GM12878 (cell line): ENCODE measurements at regions of chr7 and their contacts with region 1.

Region 1: GRCh38 chr7:82388138-82388537 is 55.4 kb downstream of the CACNA2D1 start:
- DNase-seq: no peak
- ATAC-seq: no peak
- H3K4me3 ChIP-seq: no peak overlapping the region
- H3K27ac ChIP-seq: no peak overlapping the region
- H3K4me1 ChIP-seq: no peaks in the 10 kb centered on the region
- H3K27me3 ChIP-seq: no peaks in the 10 kb centered on the region
- CTCF ChIP-seq: no peak
- EP300 ChIP-seq: no peak
- POLR2A ChIP-seq: no peak
- RAD21 ChIP-seq: no peak

Region 2: DNA sequence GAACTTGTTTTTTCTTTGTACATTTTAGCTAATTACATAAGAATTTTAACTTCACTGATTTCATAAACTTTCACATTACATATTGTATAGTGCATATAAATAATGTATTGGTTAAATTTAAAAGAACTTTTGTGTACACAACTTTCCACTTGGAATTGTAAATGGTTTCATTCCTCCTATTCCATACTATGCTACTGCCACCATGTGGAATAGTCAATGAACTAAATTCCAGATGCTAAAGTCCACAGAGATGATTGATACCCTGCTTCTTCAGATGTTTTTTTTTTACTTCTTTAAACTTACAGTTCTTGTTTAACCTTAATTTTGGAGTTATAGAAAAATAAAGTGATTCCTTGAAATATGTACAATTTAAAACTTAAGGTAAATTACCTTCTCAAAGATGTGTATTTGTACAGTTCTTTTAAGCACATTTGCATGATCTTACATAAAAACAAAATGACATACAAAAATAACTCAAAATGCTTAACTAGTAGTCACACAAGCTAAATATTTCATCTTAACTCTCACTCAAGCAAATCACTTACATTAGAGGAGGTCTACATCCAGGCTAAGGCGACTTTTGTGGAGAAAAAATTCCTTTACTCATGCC is 370.7 kb before region 1 on chr7:
- CTCF ChIA-PET with region 1: no interaction called
- POLR2A ChIA-PET with region 1: no interaction called
- RAD21 ChIA-PET with region 1: no interaction called
- SMC1A ChIA-PET with region 1: no interaction called
- in situ Hi-C with region 1: no loop called
- intact Hi-C with region 1: no loop called
- DNase-seq: no peak
- ATAC-seq: 0 out of 3 replicates have a peak, but pooled peaks have one; percentile 28
- H3K4me3 ChIP-seq: no peak overlapping the region
- H3K27ac ChIP-seq: no peak overlapping the region
- H3K4me1 ChIP-seq: no peaks in the 10 kb centered on the region
- H3K27me3 ChIP-seq: no peaks in the 10 kb centered on the region; a peak in 1 of 4 replicates
- CTCF ChIP-seq: peak; percentile 14 to 52 (median 28); a peak in 2 of 6 replicates
- EP300 ChIP-seq: no peak
- POLR2A ChIP-seq: no peak
- RAD21 ChIP-seq: peak; percentile 71

Region 3: DNA sequence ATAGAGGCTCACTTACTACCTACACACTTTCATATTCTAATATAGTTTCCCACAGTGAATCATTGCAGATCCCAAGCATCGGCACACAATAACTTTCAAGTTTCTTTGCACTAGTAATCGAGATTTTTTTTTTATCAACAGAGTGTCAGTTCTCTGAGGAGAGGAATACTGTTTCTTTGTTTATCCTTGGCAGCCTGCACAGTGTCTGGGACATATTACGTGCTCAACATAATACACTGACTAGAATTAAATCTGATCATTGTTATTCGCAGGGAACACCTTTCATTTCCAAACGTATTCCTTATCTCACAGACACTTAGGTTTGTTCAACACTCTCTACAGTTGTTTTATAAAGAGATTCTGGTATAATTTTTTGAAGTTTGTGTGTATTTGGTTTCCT is 39.9 kb before region 1 on chr7:
- CTCF ChIA-PET with region 1: interaction called, 3 read pairs
- POLR2A ChIA-PET with region 1: no interaction called
- RAD21 ChIA-PET with region 1: interaction called, 4 read pairs
- SMC1A ChIA-PET with region 1: interaction called, 11 read pairs
- in situ Hi-C with region 1: no loop called
- intact Hi-C with region 1: no loop called
- DNase-seq: no peak
- ATAC-seq: peak; percentile 16; the same call in 2 of the 3 replicates
- H3K4me3 ChIP-seq: no peak overlapping the region
- H3K27ac ChIP-seq: no peak overlapping the region
- H3K4me1 ChIP-seq: no peaks in the 10 kb centered on the region
- H3K27me3 ChIP-seq: no peaks in the 10 kb centered on the region
- CTCF ChIP-seq: no peak
- EP300 ChIP-seq: no peak
- POLR2A ChIP-seq: no peak
- RAD21 ChIP-seq: no peak

Region 4: GRCh38 chr7:82362129-82362706 is 25.9 kb before region 1 on chr7:
- CTCF ChIA-PET with region 1: interaction called, 6 read pairs
- POLR2A ChIA-PET with region 1: interaction called, 5 read pairs
- RAD21 ChIA-PET with region 1: interaction called, 12 read pairs
- SMC1A ChIA-PET with region 1: interaction called, 6 read pairs
- in situ Hi-C with region 1: no loop called
- intact Hi-C with region 1: no loop called
- DNase-seq: no peak
- ATAC-seq: no peak
- H3K4me3 ChIP-seq: no peak overlapping the region
- H3K27ac ChIP-seq: no peak overlapping the region
- H3K4me1 ChIP-seq: no peaks in the 10 kb centered on the region
- H3K27me3 ChIP-seq: no peaks in the 10 kb centered on the region
- CTCF ChIP-seq: no peak
- EP300 ChIP-seq: no peak
- POLR2A ChIP-seq: no peak
- RAD21 ChIP-seq: no peak

Region 5: DNA sequence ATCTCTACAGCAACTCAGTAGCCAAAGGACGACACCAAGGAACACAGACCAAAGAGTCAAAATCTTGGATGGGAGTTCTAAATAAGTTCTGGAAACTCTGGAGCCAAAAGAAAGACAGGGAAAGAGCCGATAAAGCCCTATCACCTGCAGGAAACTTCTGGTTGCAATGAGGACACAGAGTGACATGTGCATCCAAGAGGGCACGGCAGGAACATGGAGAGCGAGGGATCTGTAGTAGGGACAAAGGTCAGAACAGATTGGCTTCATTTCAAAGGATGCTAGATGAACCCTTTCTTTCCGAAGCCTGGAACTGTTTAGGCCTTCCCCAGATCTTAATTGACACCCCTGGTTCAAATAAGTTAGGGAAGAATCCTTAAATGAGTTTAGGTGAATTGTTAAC is 16.0 kb after region 1 on chr7:
- CTCF ChIA-PET with region 1: interaction called, 6 read pairs
- POLR2A ChIA-PET with region 1: interaction called, 5 read pairs
- RAD21 ChIA-PET with region 1: interaction called, 19 read pairs
- SMC1A ChIA-PET with region 1: interaction called, 70 read pairs
- in situ Hi-C with region 1: no loop called
- intact Hi-C with region 1: no loop called
- DNase-seq: no peak
- ATAC-seq: peak; percentile 18; the same call in 1 of the 3 replicates
- H3K4me3 ChIP-seq: no peak overlapping the region
- H3K27ac ChIP-seq: no peak overlapping the region
- H3K4me1 ChIP-seq: no peaks in the 10 kb centered on the region
- H3K27me3 ChIP-seq: no peaks in the 10 kb centered on the region
- CTCF ChIP-seq: no peak
- EP300 ChIP-seq: no peak
- POLR2A ChIP-seq: no peak
- RAD21 ChIP-seq: no peak

Region 6: GRCh38 chr7:82410461-82410860 is 22.3 kb after region 1 on chr7:
- CTCF ChIA-PET with region 1: no interaction called
- POLR2A ChIA-PET with region 1: interaction called, 14 read pairs
- RAD21 ChIA-PET with region 1: interaction called, 19 read pairs
- SMC1A ChIA-PET with region 1: interaction called, 32 read pairs
- in situ Hi-C with region 1: no loop called
- intact Hi-C with region 1: no loop called
- DNase-seq: no peak
- ATAC-seq: peak; percentile 5; the same call in 1 of the 3 replicates
- H3K4me3 ChIP-seq: no peak overlapping the region
- H3K27ac ChIP-seq: no peak overlapping the region
- H3K4me1 ChIP-seq: no peaks in the 10 kb centered on the region
- H3K27me3 ChIP-seq: no peaks in the 10 kb centered on the region
- CTCF ChIP-seq: no peak
- EP300 ChIP-seq: no peak
- POLR2A ChIP-seq: no peak
- RAD21 ChIP-seq: no peak

Region 7: DNA sequence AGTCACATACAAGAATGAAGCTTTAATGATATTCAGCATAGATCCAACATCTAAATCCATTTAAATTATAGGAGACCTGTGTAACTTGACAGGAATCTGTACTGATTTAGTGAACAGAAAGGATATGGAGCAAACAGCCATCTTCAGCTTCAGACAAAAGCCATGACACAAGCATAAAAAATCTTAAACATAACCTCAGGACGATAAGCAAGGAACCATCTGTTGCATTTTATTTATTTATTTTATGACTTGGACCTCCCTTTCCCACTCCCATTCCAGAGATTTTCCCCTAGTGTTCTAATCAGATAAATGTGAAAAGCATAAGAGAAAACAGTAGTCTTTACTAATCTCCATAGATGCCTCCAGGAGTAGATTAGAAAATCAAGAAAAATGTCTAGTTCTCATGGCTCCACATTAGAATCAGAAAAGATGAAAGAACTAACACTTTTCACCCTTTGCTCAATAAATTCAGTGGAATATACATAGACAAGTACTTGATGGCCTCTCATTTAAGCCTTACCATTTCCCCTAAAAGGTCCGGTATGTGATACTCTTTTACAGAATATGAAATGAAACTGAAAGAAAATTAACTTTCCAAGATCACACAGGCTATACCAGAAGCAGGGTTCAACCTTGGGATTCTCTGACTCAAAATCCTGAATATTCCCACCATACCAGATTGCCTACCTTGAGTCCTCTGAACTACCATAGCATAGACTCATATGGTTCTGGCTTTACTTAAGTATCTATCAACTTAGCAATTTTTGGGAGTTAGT is 40.2 kb after region 1 on chr7:
- CTCF ChIA-PET with region 1: interaction called, 5 read pairs
- POLR2A ChIA-PET with region 1: interaction called, 20 read pairs
- RAD21 ChIA-PET with region 1: interaction called, 7 read pairs
- SMC1A ChIA-PET with region 1: interaction called, 21 read pairs
- in situ Hi-C with region 1: no loop called
- intact Hi-C with region 1: loop called (anchors 2 kb)
- DNase-seq: no peak
- ATAC-seq: peak; percentile 50
- H3K4me3 ChIP-seq: no peak overlapping the region
- H3K27ac ChIP-seq: no peak overlapping the region
- H3K4me1 ChIP-seq: no peaks in the 10 kb centered on the region
- H3K27me3 ChIP-seq: no peaks in the 10 kb centered on the region
- CTCF ChIP-seq: no peak
- EP300 ChIP-seq: no peak
- POLR2A ChIP-seq: no peak
- RAD21 ChIP-seq: no peak

Region 8: GRCh38 chr7:82438521-82438920 is 50.4 kb after region 1 on chr7:
- CTCF ChIA-PET with region 1: interaction called, 5 read pairs
- POLR2A ChIA-PET with region 1: interaction called, 5 read pairs
- RAD21 ChIA-PET with region 1: interaction called, 7 read pairs
- SMC1A ChIA-PET with region 1: interaction called, 15 read pairs
- in situ Hi-C with region 1: no loop called
- intact Hi-C with region 1: loop called (anchors 2 kb)
- DNase-seq: no peak
- ATAC-seq: peak; percentile 32
- H3K4me3 ChIP-seq: no peak overlapping the region
- H3K27ac ChIP-seq: no peak overlapping the region
- H3K4me1 ChIP-seq: no peaks in the 10 kb centered on the region
- H3K27me3 ChIP-seq: peaks cover 2 to 6% of the 10 kb centered on the region in 2 experiments; a peak in 2 of 4 replicates
- CTCF ChIP-seq: no peak
- EP300 ChIP-seq: no peak
- POLR2A ChIP-seq: no peak
- RAD21 ChIP-seq: no peak

Region 9: GRCh38 chr7:82697897-82698296 is 309.8 kb after region 1 on chr7:
- CTCF ChIA-PET with region 1: no interaction called
- POLR2A ChIA-PET with region 1: no interaction called
- RAD21 ChIA-PET with region 1: no interaction called
- SMC1A ChIA-PET with region 1: no interaction called
- in situ Hi-C with region 1: no loop called
- intact Hi-C with region 1: no loop called
- DNase-seq: no peak
- ATAC-seq: no peak
- H3K4me3 ChIP-seq: no peak overlapping the region
- H3K27ac ChIP-seq: no peak overlapping the region
- H3K4me1 ChIP-seq: no peaks in the 10 kb centered on the region
- H3K27me3 ChIP-seq: 0 out of 4 replicates have a peak, but pooled peaks cover 0 to 3% of the 10 kb centered on the region in 2 experiments
- CTCF ChIP-seq: no peak
- EP300 ChIP-seq: no peak
- POLR2A ChIP-seq: no peak
- RAD21 ChIP-seq: no peak